Left colon (tissue), 2 donors: ENCODE measurements at regions of chr4 and their contacts with region 1.

Region 1: DNA sequence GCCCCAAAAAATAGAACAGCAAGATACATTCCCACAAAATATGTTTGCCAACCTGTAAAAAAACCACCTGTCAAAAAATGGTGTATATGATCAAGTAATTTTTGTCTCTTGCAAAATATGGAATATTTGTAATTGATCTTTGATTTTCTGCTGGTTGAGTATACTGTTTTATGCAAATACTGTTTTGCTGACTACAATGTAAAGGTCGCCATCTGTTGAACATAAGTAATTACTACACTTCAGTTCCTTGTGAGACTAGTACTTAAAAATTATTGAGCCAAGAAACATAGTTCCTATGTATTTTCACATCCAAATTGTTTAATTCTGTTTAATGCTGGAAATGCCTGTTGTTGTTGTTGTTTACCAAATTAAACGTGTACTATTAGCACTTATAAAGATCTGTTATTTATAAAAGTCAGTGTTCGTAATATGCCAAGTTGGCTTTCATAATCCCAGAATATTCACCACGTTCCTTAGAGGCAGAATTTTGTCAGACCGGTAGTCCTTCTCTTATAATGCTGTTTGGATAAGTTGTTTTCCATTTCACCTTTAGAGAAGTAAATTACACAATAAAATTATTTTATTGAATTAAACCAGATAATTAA is 144.2 kb downstream of the PDLIM5 start:
- DNase-seq: no peak
- ATAC-seq: peak; percentile 76

Region 2: GRCh38 chr4:94406668-94407437 is 189.1 kb before region 1 on chr4:
- intact Hi-C with region 1: loop called (anchors 2 to 5 kb)
- DNase-seq: peak; percentile 53 to 79
- ATAC-seq: peak; percentile 78